Activated CD8-positive, alpha-beta memory T cell treated with anti-CD3 and anti-CD28 coated beads, Interleukin-2, amount 10 ng/mL, durations not matched to agents 7 days and 5 days (primary cell): ENCODE measurements at regions of chr19 and their contacts with region 1.

Region 1: DNA sequence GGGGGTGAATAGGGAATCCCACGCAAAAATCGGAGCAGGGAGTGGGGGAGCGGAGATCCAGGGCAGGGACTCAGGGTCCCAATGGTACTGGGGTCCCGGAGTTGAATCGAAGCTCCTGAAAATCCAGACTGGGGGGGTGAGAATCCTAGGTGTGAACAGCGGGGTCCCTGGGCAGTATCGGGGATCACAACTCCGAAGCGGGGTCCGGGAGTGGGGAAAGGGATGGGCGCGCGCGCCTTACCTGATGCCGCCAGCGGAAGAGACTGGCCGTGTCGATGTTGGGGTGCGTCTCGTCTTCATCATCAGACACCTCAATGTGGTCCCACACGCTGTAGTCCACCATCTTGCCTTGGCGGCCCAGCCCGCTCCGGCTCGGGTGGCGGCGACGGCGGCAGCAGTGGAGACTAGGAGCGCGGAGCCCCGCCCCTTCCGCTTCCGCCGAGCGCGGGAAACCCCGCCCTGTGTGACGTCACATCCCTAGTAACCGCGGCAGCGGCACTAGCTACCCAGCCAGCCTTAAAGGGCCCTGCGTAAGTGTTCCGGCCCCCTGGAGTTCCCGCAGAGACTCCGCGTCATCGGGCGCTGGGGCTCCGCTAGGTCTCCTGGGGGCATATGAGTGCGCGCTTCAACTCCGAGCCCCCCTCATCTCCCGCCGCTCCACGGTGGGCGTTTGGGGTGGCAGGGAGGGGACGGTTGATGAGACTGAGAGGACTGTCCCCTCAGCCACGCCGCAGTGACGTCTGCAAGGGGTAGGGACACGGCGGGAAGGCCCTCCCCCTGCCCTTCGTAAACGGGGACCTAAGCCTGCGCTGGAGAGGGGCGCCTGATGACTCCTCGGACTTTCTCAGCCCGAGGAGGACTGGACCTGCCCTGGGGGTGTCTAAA is at the start of gene CDC37:
- DNase-seq: peak; percentile 98
- ATAC-seq: peak; percentile 71
- H3K4me3 Mint-ChIP-seq: peak within 1 kb of the TSS; percentile 97
- H3K27ac Mint-ChIP-seq: peak within 1 kb of the TSS; percentile 93
- H3K4me1 Mint-ChIP-seq: peaks cover 60% of the 10 kb centered on the region
- H3K27me3 Mint-ChIP-seq: no peaks in the 10 kb centered on the region
- total RNA-seq, gene CDC37: 283 to 309 TPM

Region 2: DNA sequence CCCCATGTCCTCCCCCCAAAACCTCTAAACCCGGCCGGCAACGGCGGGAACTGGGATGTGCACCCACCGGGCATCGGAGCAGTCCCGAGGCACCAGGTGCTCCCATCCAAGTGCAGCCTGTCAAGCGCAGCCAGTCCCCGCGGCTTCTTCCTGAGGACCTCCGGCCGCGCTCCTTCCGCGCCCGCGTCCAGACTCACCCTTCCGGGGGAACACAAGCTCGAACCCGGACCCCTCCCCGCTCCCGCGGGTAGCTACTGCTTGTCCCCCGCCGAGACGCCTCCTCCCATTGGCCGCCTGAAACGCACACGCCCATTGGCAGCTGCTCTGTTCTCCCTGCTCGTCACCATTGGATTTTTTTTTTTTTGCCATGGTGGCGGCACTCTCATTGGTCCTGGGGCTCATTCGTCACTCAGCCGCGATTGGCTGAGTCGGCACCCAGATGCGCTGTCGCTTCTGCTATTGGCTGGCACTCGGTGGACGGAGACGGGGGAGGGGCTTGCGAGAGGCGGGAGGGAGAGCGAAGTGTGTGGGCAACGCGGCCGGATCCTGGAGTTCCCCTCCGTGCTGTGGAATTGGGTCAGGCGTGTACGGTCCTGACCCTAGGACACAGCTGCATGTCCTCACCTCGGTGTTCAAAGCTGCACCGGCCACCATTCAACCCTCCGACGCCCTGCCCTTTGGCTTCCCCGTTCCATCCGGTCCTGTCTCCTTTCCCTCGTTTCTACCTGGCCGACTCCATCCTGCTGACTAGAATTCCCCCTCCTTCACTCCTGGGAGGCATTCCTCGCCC is 22.9 kb before region 1 on chr19 and contains the start of gene TYK2:
- CTCF ChIA-PET with region 1: interaction called, 13 read pairs
- DNase-seq: peak; percentile 98
- ATAC-seq: peak; percentile 97
- H3K4me3 Mint-ChIP-seq: peak within 1 kb of the TSS; percentile 90
- H3K27ac Mint-ChIP-seq: peak within 1 kb of the TSS; percentile 94
- H3K4me1 Mint-ChIP-seq: peaks cover 21% of the 10 kb centered on the region
- H3K27me3 Mint-ChIP-seq: no peaks in the 10 kb centered on the region
- total RNA-seq, gene TYK2: 277 to 296 TPM

Region 3: DNA sequence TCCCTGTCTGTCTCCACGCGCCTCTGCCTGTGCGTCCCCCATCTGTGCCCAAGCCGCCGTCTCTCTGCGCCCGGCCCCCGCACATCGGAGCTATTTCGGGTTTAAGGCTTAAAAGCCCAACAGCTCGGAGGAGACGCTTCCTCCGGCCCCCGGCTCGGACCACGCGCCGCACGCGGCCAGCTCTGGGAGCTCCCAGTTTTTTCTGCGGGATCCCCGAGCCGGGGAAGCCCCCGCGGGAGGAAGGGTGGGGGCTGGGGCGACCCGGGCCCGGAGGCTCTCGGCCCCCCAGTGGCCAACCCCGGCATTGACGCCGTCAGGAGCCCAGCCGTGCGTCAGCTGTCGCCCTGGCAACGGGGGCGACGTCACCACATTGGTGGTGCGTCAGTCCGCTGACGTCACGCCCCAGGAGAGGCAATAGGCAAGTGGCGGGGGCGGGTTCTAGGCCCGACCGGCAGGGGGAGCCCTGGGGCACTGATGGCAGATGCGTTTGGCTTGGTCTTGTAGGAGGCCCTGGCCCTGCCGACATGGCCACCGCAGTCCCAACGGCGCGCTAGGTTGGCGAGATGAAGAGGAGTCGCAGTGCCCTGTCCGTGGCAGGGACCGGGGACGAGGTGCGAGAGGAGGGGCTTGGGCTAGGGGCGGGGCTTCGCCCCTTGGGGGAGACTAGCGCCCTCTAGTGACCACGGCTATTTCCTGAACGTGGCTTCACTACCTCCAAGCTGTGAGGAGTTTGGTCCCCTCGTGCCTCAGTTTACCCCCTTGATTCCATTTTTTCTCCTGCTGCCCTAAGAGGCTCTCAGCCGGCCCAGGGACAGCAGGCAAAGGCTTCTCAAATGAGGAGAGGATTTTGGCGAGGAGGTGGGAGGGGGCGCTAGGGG is 13.2 kb after region 1 on chr19:
- CTCF ChIA-PET with region 1: interaction called, 1,020 read pairs
- DNase-seq: peak; percentile 98
- ATAC-seq: peak; percentile 48
- H3K4me3 Mint-ChIP-seq: peak overlapping the region; percentile 76
- H3K27ac Mint-ChIP-seq: peak overlapping the region; percentile 95
- H3K4me1 Mint-ChIP-seq: peaks cover 61% of the 10 kb centered on the region
- H3K27me3 Mint-ChIP-seq: peaks cover 4% of the 10 kb centered on the region

Region 4: DNA sequence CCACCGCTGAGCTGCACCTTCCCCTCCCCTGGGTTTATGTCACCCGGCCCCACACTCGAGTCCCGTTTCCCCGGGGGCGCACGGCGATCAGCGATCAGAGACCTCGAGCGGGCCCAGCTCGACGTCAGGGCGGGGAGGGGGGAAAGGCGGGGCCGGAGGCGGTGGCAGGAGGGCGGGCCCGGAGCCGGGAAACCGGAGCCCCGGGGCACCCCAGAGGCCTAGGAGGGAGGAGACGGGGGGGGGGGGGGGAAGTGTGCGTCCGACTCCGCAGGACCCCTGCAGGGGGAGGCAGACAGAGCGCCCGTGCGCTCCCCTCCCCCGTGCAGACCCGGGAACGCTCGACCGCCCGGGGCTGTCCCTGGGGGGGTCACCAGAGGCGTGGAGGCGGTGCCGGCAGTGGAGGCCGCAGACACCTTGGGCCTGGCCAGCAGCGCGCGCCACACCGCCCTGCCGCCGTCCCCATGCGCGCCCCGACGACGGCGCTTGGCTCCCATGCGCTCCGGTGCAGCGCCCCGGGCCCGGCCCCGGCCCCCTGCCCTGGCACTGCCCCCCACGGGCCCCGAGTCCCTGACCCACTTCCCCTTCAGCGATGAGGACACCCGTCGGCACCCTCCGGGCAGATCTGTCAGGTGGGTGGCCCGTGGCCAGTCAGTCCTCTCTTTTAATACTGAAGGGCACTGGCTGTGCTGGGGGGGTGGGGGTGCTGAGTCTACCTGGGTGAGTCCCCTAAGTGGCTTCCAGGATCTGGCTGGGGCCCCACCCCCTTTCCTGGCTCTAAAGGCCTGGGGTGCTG is 28.8 kb after region 1 on chr19:
- CTCF ChIA-PET with region 1: interaction called, 1,020 read pairs
- DNase-seq: peak; percentile 75
- ATAC-seq: peak; percentile 49
- H3K4me3 Mint-ChIP-seq: peak overlapping the region; percentile 80
- H3K27ac Mint-ChIP-seq: peak overlapping the region; percentile 96
- H3K4me1 Mint-ChIP-seq: peaks cover 75% of the 10 kb centered on the region
- H3K27me3 Mint-ChIP-seq: peaks cover 6% of the 10 kb centered on the region

Region 5: GRCh38 chr19:10478903-10479384 is 75.6 kb after region 1 on chr19:
- CTCF ChIA-PET with region 1: interaction called, 20 read pairs
- DNase-seq: peak; percentile 94
- ATAC-seq: peak; percentile 97
- H3K4me3 Mint-ChIP-seq: peak overlapping the region; percentile 28
- H3K27ac Mint-ChIP-seq: no peak overlapping the region
- H3K4me1 Mint-ChIP-seq: peaks cover 12% of the 10 kb centered on the region
- H3K27me3 Mint-ChIP-seq: no peaks in the 10 kb centered on the region

Region 6: GRCh38 chr19:10565567-10566407 is 162.4 kb after region 1 on chr19 and contains the start of gene KRI1:
- CTCF ChIA-PET with region 1: interaction called, 12 read pairs
- DNase-seq: peak; percentile 99
- ATAC-seq: peak; percentile 48
- H3K4me3 Mint-ChIP-seq: peak within 1 kb of the TSS; percentile 96
- H3K27ac Mint-ChIP-seq: peak within 1 kb of the TSS; percentile 93
- H3K4me1 Mint-ChIP-seq: peaks cover 40% of the 10 kb centered on the region
- H3K27me3 Mint-ChIP-seq: no peaks in the 10 kb centered on the region
- total RNA-seq, gene KRI1: 68.1 to 72.2 TPM